T-cell (primary cell): ENCODE measurements at regions of chr14 and their contacts with region 1.

Region 1: DNA sequence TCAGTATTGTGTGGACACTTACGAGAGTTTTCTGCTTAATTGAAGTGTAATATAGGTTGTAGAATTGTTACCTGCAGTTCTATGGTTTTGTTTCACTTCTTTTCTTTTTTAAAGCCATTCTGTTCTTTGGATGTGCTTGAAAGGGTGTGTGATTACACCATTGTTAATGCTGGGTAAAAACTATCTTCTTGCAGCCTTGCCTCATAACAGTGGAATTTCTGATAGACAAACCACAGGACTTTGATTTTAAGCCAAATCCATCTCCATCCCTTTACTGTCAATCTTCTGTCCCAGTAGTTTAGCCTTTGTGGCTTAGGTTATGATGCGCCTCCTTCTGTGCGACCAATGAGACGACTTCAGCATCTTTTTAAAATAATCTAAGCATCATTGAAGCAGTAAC is 182.3 kb downstream of the PELI2 start:
- DNase-seq: no peak
- ATAC-seq: no peak
- H3K4me3 ChIP-seq: no peak overlapping the region
- H3K4me3 Mint-ChIP-seq: no peak overlapping the region
- H3K27ac ChIP-seq: no peak overlapping the region
- H3K27ac Mint-ChIP-seq: no peak overlapping the region
- H3K4me1 ChIP-seq: no peaks in the 10 kb centered on the region
- H3K4me1 Mint-ChIP-seq: peaks cover 0 to under 1% (median 0%) of the 10 kb centered on the region in 3 donors
- H3K27me3 ChIP-seq: no peaks in the 10 kb centered on the region
- H3K27me3 Mint-ChIP-seq: no peaks in the 10 kb centered on the region

Region 2: GRCh38 chr14:56278383-56278782 is 22.1 kb before region 1 on chr14:
- CTCF ChIA-PET with region 1: no interaction called
- POLR2A ChIA-PET with region 1: interaction called in 1 of 2 experiments, 15 read pairs
- DNase-seq: no peak
- ATAC-seq: no peak
- H3K4me3 ChIP-seq: no peak overlapping the region
- H3K4me3 Mint-ChIP-seq: no peak overlapping the region
- H3K27ac ChIP-seq: no peak overlapping the region
- H3K27ac Mint-ChIP-seq: no peak overlapping the region
- H3K4me1 ChIP-seq: no peaks in the 10 kb centered on the region
- H3K4me1 Mint-ChIP-seq: no peaks in the 10 kb centered on the region
- H3K27me3 ChIP-seq: no peaks in the 10 kb centered on the region
- H3K27me3 Mint-ChIP-seq: no peaks in the 10 kb centered on the region